ENCODE measurements at regions of chr5 and their contacts with region 1.

Region 1: GRCh38 chr5:79133657-79134451 is 22.2 kb downstream of the BHMT start:
- DNase-seq: peak; percentile 81
- ATAC-seq: peak; percentile 77
- H3K4me3 Mint-ChIP-seq: peak overlapping the region; percentile 48
- H3K27ac Mint-ChIP-seq: peak overlapping the region; percentile 75
- H3K4me1 Mint-ChIP-seq: peaks cover 13% of the 10 kb centered on the region
- H3K27me3 Mint-ChIP-seq: peaks cover 2% of the 10 kb centered on the region

Region 2: GRCh38 chr5:78886341-78887230 is 247.3 kb before region 1 on chr5:
- CTCF ChIA-PET with region 1: interaction called, 32 read pairs
- POLR2A ChIA-PET with region 1: no interaction called
- DNase-seq: no peak
- ATAC-seq: no peak
- H3K4me3 Mint-ChIP-seq: no peak overlapping the region
- H3K27ac Mint-ChIP-seq: no peak overlapping the region
- H3K4me1 Mint-ChIP-seq: peaks cover 24% of the 10 kb centered on the region
- H3K27me3 Mint-ChIP-seq: peaks cover 7% of the 10 kb centered on the region

Region 3: DNA sequence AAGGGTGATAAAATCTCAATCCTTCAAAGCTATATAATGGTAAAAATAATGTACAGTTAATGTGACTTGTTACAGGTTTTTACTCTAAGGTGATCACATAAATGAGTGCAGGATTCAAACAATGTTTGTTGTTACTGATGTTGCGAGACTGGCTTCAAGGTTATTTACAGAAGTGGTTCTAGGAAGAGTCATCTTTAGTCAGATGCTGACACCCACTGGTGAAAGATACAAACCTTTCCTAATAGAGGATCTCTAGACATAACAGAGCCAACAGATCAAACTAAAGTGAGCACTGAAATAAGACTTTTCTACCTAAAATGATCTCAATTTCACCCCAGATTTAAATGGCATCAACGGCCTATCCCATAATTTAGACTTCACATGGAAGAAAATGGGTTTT is 169.0 kb before region 1 on chr5:
- CTCF ChIA-PET with region 1: interaction called, 11 read pairs
- POLR2A ChIA-PET with region 1: no interaction called
- DNase-seq: no peak
- ATAC-seq: no peak
- H3K4me3 Mint-ChIP-seq: no peak overlapping the region
- H3K27ac Mint-ChIP-seq: no peak overlapping the region
- H3K4me1 Mint-ChIP-seq: no peaks in the 10 kb centered on the region
- H3K27me3 Mint-ChIP-seq: no peaks in the 10 kb centered on the region

Region 4: GRCh38 chr5:79020861-79021561 is 112.8 kb before region 1 on chr5:
- CTCF ChIA-PET with region 1: interaction called, 368 read pairs
- POLR2A ChIA-PET with region 1: no interaction called
- DNase-seq: peak; percentile 54
- ATAC-seq: peak; percentile 64
- H3K4me3 Mint-ChIP-seq: no peak overlapping the region
- H3K27ac Mint-ChIP-seq: no peak overlapping the region
- H3K4me1 Mint-ChIP-seq: peaks cover 5% of the 10 kb centered on the region
- H3K27me3 Mint-ChIP-seq: peaks cover 53% of the 10 kb centered on the region

Region 5: DNA sequence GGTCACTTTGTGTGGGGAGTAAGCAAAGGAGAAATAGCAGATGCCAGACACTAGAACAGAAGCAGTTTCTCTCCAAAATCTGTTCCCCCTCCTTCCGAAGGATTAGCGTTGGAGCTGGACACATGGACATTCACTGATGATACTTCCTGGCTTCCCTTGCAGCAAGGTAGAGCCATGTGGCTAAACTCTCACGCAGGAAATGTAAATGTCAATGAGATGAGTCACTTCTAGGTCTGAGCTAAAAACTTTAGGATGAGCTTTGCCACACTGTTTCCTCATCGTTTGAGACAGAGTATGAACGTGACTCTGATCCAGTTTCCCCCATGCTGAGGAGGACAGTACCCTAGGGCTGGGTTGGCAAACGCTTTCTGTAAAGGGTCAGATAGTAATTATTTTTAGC is 59.2 kb before region 1 on chr5:
- CTCF ChIA-PET with region 1: interaction called, 19 read pairs
- POLR2A ChIA-PET with region 1: no interaction called
- DNase-seq: no peak
- ATAC-seq: no peak
- H3K4me3 Mint-ChIP-seq: no peak overlapping the region
- H3K27ac Mint-ChIP-seq: no peak overlapping the region
- H3K4me1 Mint-ChIP-seq: peaks cover 12% of the 10 kb centered on the region
- H3K27me3 Mint-ChIP-seq: peaks cover 18% of the 10 kb centered on the region

Region 6: GRCh38 chr5:79120216-79120615 is 13.6 kb before region 1 on chr5:
- CTCF ChIA-PET with region 1: interaction called, 46 read pairs
- POLR2A ChIA-PET with region 1: no interaction called
- DNase-seq: no peak
- ATAC-seq: no peak
- H3K4me3 Mint-ChIP-seq: no peak overlapping the region
- H3K27ac Mint-ChIP-seq: no peak overlapping the region
- H3K4me1 Mint-ChIP-seq: no peaks in the 10 kb centered on the region
- H3K27me3 Mint-ChIP-seq: peaks cover 10% of the 10 kb centered on the region

Region 7: DNA sequence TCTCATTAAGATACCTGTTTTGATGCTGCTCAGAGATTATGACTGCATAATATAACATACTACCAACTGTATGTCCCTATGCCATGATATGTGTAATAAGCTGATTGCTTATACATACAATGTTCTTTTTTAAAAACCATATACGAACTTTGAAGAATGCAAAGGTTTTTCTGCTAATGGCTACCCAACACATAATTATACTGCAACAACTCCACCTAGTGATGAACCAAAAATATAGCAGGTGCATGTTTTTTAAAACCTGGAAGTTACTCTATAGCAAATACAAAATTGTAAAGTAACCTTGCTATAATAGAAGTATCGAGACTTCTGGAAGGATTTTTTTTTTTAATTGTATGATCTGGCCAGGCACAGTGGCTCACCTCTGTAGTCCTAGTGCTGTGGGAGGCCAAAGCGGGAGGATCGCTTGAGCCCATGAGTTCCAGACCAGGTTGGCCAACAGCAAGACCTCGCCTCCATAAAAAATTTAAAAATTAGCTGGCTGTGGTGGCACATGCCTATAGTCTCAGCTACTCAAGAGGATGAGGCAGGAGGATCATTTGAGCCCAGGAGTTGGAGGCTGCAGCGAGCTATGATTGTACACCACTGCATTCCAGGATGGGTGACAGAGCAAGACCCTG is 331.0 kb after region 1 on chr5:
- CTCF ChIA-PET with region 1: interaction called, 112 read pairs
- POLR2A ChIA-PET with region 1: no interaction called
- DNase-seq: no peak
- ATAC-seq: no peak
- H3K4me3 Mint-ChIP-seq: no peak overlapping the region
- H3K27ac Mint-ChIP-seq: no peak overlapping the region
- H3K4me1 Mint-ChIP-seq: peaks cover 4% of the 10 kb centered on the region
- H3K27me3 Mint-ChIP-seq: no peaks in the 10 kb centered on the region

Measured in activated CD8-positive, alpha-beta T cell treated with anti-CD3 and anti-CD28 coated beads, Interleukin-2, amount 10 ng/mL, durations not matched to agents 7 days and 5 days (primary cell).